ENCODE measurements at regions of chr12 and their contacts with region 1.

Region 1: DNA sequence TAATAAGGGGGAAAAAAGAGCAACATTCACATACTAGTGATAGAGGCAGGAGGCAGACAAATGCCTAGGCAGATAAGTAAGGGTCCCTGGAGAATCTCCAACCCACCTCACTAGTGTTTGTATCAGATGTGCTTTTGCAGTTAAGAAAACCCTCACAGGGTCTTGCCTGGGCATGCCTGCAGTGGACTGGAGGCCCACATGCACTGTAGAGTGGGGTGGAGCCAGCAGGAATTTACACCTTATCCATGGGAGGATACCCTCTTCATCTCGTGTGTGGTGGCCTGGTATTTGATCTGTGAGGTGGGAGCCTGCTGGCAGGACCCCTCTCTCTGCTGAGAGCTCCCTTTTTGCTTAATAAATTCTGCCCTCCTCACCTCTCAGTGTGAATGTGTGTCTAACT is 238.0 kb upstream of the SLC16A7 start:
- DNase-seq: no peak
- H3K4me3 ChIP-seq: no peak overlapping the region
- H3K27ac ChIP-seq: no peak overlapping the region
- H3K4me1 ChIP-seq: no peaks in the 10 kb centered on the region
- H3K27me3 ChIP-seq: no peaks in the 10 kb centered on the region
- CTCF ChIP-seq: no peak
- POLR2A ChIP-seq: no peak

Region 2: DNA sequence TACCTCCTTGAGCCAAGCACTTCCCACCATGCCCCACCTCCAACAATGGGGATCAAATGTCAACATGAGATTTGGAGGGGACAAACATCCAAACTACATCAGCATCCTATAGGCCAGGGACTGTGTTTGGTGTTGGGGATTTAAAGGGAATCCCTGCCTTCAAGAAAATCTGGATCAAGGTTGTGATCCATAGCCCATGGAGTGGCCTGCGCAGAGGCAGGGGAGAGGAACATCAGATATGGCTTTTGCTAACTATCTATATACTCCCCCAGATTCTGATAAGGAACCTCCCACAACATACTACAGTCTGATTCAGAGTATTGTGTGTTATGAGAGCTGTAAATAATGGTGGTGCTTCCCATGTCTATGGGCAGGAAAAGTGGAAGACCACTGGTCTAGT is 1802.9 kb before region 1 on chr12:
- intact Hi-C with region 1: no loop called
- DNase-seq: no peak
- H3K4me3 ChIP-seq: no peak overlapping the region
- H3K27ac ChIP-seq: no peak overlapping the region
- H3K4me1 ChIP-seq: no peaks in the 10 kb centered on the region
- H3K27me3 ChIP-seq: peaks cover 0 to 6% of the 10 kb centered on the region in 2 donors
- CTCF ChIP-seq: no peak
- POLR2A ChIP-seq: no peak

Region 3: GRCh38 chr12:59219148-59219547 is 138.7 kb before region 1 on chr12:
- intact Hi-C with region 1: no loop called
- DNase-seq: no peak
- H3K4me3 ChIP-seq: no peak overlapping the region
- H3K27ac ChIP-seq: no peak overlapping the region
- H3K4me1 ChIP-seq: no peaks in the 10 kb centered on the region
- H3K27me3 ChIP-seq: no peaks in the 10 kb centered on the region
- CTCF ChIP-seq: no peak
- POLR2A ChIP-seq: no peak

Region 4: DNA sequence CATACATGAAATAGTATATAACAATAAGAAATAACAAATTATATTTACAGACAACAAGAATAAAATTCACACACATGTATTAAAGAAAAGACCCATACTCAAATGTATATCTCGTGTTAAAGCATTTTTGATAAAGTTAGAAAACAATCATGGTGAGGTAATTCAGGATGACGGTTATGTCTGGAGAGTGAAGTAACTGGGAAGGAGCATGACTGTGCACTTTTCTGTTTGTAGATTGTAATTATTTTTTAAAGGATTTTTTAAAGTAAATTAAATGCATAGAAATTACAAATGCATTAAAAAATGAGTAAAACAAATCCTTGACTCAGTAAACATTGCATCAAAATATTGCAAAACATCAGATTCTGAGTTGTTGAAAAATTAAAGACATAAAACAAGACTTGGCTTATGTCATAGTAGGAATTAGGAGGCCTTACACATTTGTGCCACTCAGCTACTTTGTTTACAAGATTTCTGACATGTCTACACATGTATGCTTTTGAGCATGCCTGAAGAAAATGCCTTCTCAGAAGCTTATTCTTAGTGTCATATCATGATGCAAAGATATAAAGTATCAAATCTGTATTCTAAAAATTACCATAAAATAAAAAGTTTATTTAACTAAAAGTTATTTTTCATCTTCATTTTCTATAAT is 1563.2 kb after region 1 on chr12:
- intact Hi-C with region 1: loop called (anchors 5 kb)
- DNase-seq: no peak
- H3K4me3 ChIP-seq: no peak overlapping the region
- H3K27ac ChIP-seq: no peak overlapping the region
- H3K4me1 ChIP-seq: no peaks in the 10 kb centered on the region
- H3K27me3 ChIP-seq: no peaks in the 10 kb centered on the region
- CTCF ChIP-seq: no peak
- POLR2A ChIP-seq: no peak

Measured in breast epithelium (tissue), 4 donors.